Activated CD4-positive, alpha-beta memory T cell treated with anti-CD3 and anti-CD28 coated beads for 36 hours (primary cell): ENCODE measurements at regions of chr4 and their contacts with region 1.

Region 1: DNA sequence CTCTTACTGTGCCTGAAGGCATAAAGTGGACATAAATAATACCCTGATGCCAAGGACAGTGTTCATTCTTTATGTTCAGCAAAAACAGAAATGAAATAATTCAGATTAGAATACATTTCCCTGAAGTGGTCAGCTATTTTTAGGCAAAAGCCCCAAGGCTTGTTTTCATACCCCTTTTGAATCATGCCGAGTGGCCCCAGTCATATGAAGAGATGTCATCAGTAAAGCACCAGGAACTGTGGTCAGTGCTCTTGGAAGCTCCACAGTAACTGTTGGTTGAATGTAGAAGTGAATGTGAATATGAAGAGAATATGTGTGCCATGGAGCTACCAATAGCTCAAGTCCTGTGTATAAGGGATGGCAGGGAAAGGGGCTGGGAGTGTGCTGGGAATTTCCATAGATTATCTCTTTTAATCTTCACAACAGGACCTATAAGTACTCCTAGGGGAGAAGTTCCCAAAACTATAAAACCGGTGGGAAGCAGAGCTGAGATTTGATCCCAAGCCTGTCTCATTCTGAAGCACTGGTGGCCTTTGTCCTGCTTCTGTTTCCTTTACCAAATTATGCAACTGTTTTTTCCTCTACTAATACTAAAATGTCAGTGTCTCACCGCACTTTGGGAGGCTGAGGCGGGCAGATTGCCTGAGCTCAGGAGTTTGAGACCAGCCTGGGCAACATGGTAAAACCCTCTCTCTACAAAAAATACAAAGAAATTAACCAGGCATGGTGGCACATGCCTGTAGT is 52.6 kb downstream of the FNIP2 start:
- DNase-seq: peak; percentile 62
- H3K4me3 Mint-ChIP-seq: no peak overlapping the region
- H3K27ac Mint-ChIP-seq: peak overlapping the region; percentile 63
- H3K4me1 Mint-ChIP-seq: peaks cover 78% of the 10 kb centered on the region
- H3K27me3 Mint-ChIP-seq: no peaks in the 10 kb centered on the region

Region 2: GRCh38 chr4:158722917-158723793 is 98.2 kb before region 1 on chr4 and contains the start of gene PPID:
- CTCF ChIA-PET with region 1: interaction called, 3 read pairs
- POLR2A ChIA-PET with region 1: interaction called, 8 read pairs
- intact Hi-C with region 1: loop called (anchors 1 kb)
- DNase-seq: peak; percentile 91
- H3K4me3 Mint-ChIP-seq: peak within 1 kb of the TSS; percentile 93
- H3K27ac Mint-ChIP-seq: peak within 1 kb of the TSS; percentile 99
- H3K4me1 Mint-ChIP-seq: peaks cover 54% of the 10 kb centered on the region
- H3K27me3 Mint-ChIP-seq: peaks cover 8% of the 10 kb centered on the region
- total RNA-seq, gene PPID: 66.4 to 67.2 TPM

Region 3: DNA sequence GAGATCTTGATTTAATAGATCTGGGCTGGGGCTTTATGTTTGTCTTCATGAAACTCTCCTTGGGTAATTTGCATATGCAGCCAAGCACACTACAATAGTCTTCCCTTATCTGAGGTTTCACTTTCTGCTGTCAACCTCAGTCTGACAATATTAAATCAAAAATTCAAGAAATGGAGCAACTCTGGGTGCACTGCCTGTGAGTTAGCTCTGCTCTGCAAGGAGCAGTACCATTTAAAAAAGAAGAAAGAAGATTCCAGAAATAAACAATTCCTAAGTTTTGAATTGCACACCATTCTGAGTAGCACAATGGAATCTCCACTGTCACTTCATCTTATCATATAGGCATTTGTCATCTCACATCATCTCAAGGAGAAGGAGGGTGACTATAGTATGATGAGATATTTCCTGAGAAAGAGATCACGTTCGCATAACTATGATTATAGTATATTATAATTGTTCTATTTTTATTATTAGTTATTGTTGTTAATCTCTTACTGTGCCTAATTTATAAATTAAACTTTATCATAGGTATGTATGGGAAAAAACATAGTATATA is 43.2 kb before region 1 on chr4:
- CTCF ChIA-PET with region 1: interaction called, 4 read pairs
- POLR2A ChIA-PET with region 1: no interaction called
- intact Hi-C with region 1: loop called (anchors 2 kb)
- DNase-seq: no peak
- H3K4me3 Mint-ChIP-seq: peak overlapping the region; percentile 1
- H3K27ac Mint-ChIP-seq: peak overlapping the region; percentile 32
- H3K4me1 Mint-ChIP-seq: peaks cover 40% of the 10 kb centered on the region
- H3K27me3 Mint-ChIP-seq: no peaks in the 10 kb centered on the region

Region 4: DNA sequence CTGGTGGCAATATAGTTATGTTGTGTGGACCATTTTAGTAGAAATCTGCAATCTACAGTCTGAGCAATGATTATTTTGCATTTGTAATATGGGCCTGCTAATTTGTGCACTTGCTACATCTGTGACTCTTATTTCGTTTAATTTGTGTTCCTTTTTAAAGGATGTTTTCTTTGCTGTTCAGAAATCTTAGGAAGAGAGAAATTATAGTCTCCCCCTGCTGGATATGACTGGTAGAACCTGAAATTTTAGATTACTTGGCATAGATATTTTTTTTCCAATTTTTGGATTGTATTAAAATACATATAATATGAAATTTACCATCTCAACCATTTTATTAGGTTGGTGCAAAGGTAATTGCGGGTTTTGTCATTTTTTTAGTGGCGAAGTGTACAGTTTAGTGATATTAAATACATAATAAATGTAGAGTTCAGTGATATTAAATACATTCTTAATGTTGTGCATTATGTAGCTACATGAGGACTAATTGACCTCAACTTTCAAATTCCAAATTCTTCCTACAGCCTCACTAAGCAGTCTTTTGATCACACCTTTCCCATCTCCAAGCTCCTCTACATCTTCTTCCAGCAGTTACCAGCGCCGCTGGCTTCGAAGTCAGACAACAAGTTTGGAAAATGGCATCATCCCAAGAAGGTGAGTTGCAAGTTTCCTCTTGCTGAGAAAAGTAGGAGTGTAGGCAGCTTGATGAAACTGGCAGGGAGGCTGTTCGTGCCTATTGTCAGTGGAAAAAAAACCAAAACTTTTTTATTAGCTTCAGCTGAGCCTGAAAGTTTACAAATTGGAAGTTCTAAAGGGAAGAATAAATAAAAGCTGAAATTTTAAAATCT is 29.6 kb after region 1 on chr4:
- CTCF ChIA-PET with region 1: interaction called, 11 read pairs
- POLR2A ChIA-PET with region 1: interaction called, 5 read pairs
- intact Hi-C with region 1: no loop called
- DNase-seq: no peak
- H3K4me3 Mint-ChIP-seq: no peak overlapping the region
- H3K27ac Mint-ChIP-seq: no peak overlapping the region
- H3K4me1 Mint-ChIP-seq: peaks cover 18% of the 10 kb centered on the region
- H3K27me3 Mint-ChIP-seq: no peaks in the 10 kb centered on the region

Region 5: DNA sequence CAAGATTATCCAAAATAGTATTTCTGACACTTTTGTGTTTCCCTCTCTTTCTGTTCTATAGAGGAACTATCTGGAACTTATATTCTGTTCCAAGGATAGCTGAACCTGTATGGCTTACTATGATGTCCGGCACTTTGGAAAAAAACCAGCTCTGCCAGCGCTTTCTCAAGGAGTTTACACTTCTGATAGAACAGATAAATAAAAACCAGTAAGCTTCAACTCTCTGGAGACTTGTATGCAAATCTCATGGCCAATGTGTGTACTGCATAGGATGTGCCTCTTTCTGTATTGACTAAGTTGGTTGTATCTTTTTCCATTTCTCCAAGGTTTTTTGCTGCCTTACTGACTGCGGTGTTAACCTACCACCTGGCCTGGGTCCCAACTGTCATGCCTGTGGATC is 39.9 kb after region 1 on chr4:
- CTCF ChIA-PET with region 1: no interaction called
- POLR2A ChIA-PET with region 1: no interaction called
- intact Hi-C with region 1: no loop called
- DNase-seq: no peak
- H3K4me3 Mint-ChIP-seq: no peak overlapping the region
- H3K27ac Mint-ChIP-seq: no peak overlapping the region
- H3K4me1 Mint-ChIP-seq: peaks cover 2% of the 10 kb centered on the region
- H3K27me3 Mint-ChIP-seq: no peaks in the 10 kb centered on the region

Region 6: GRCh38 chr4:159102622-159103383 is 281.4 kb after region 1 on chr4 and contains the start of gene RAPGEF2:
- CTCF ChIA-PET with region 1: no interaction called
- POLR2A ChIA-PET with region 1: no interaction called
- intact Hi-C with region 1: loop called (anchors 10 kb)
- DNase-seq: peak; percentile 91
- H3K4me3 Mint-ChIP-seq: peak within 1 kb of the TSS; percentile 79
- H3K27ac Mint-ChIP-seq: peak within 1 kb of the TSS; percentile 81
- H3K4me1 Mint-ChIP-seq: peaks cover 46% of the 10 kb centered on the region
- H3K27me3 Mint-ChIP-seq: peaks cover 5% of the 10 kb centered on the region
- total RNA-seq, gene RAPGEF2: 18.6 to 22.0 TPM